ENCODE measurements at regions of chr1 and their contacts with region 1.

Region 1: GRCh38 chr1:27858072-27858958 is 14.0 kb upstream of the THEMIS2 start:
- DNase-seq: peak; percentile 80
- ATAC-seq: peak; percentile 88
- H3K4me3 Mint-ChIP-seq: no peak overlapping the region
- H3K27ac Mint-ChIP-seq: peak overlapping the region; percentile 68
- H3K4me1 Mint-ChIP-seq: peaks cover 28% of the 10 kb centered on the region
- H3K27me3 Mint-ChIP-seq: no peaks in the 10 kb centered on the region
- CTCF ChIP-seq: peak; percentile 95

Region 2: DNA sequence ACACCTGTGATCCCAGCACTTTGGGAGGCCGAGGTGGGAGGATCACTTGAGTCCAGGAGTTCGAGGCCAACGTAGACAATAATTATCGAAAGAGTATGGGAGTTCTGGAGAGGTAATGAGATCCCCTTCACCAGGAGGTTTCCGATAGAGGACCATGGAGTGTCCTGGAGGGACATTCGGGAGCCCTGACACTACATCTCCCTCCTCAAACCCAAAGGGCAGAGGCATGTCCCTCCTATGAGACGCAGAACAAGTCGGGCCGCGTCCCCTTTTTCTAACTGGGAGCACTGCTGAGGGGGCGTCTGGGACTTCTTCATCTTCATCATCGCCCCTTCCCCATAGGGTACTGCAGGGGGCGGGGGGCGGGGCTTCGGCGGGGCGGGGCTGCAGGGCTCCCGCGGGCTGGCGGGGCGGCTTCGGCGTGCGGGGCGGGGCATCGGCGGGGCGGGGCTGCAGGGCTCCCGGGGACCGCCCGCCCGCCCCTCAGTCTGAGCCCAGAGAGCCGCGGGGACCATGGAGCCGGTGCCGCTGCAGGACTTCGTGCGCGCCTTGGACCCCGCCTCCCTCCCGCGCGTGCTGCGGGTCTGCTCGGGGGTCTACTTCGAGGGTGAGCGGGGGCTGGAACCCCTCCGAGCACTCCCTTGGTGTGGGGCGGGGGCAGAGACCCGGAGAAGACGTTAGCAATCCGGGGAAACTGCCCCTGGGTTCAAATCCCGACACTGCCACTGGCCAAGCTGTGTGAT is 13.9 kb after region 1 on chr1 and contains the start of gene THEMIS2:
- CTCF ChIA-PET with region 1: interaction called, 3 read pairs
- POLR2A ChIA-PET with region 1: interaction called, 44 read pairs
- intact Hi-C with region 1: loop called (anchors 1 kb)
- DNase-seq: peak; percentile 73
- ATAC-seq: peak; percentile 71
- H3K4me3 Mint-ChIP-seq: peak within 1 kb of the TSS; percentile 97
- H3K27ac Mint-ChIP-seq: peak within 1 kb of the TSS; percentile 80
- H3K4me1 Mint-ChIP-seq: peaks cover 60% of the 10 kb centered on the region
- H3K27me3 Mint-ChIP-seq: no peaks in the 10 kb centered on the region
- CTCF ChIP-seq: no peak
- total RNA-seq, gene THEMIS2: 56.1 and 78.6 TPM in 2 replicates

Region 3: GRCh38 chr1:27891196-27891889 is 33.0 kb after region 1 on chr1:
- CTCF ChIA-PET with region 1: interaction called, 15 read pairs
- POLR2A ChIA-PET with region 1: interaction called, 19 read pairs
- intact Hi-C with region 1: loop called (anchors 1 kb)
- DNase-seq: no peak
- ATAC-seq: peak; percentile 76
- H3K4me3 Mint-ChIP-seq: peak overlapping the region; percentile 50
- H3K27ac Mint-ChIP-seq: peak overlapping the region; percentile 89
- H3K4me1 Mint-ChIP-seq: peaks cover 57% of the 10 kb centered on the region
- H3K27me3 Mint-ChIP-seq: no peaks in the 10 kb centered on the region
- CTCF ChIP-seq: no peak

Region 4: GRCh38 chr1:27959400-27960217 is 101.3 kb after region 1 on chr1 and contains the start of gene XKR8:
- CTCF ChIA-PET with region 1: interaction called, 3 read pairs
- POLR2A ChIA-PET with region 1: interaction called, 4 read pairs
- intact Hi-C with region 1: loop called (anchors 5 kb)
- DNase-seq: peak; percentile 86
- ATAC-seq: peak; percentile 99
- H3K4me3 Mint-ChIP-seq: peak within 1 kb of the TSS; percentile 89
- H3K27ac Mint-ChIP-seq: peak within 1 kb of the TSS; percentile 83
- H3K4me1 Mint-ChIP-seq: peaks cover 20% of the 10 kb centered on the region
- H3K27me3 Mint-ChIP-seq: no peaks in the 10 kb centered on the region
- CTCF ChIP-seq: no peak
- total RNA-seq, gene XKR8: 5.1 and 6.1 TPM in 2 replicates

Region 5: GRCh38 chr1:27979151-27979858 is 121.0 kb after region 1 on chr1:
- CTCF ChIA-PET with region 1: interaction called, 88 read pairs
- POLR2A ChIA-PET with region 1: interaction called, 21 read pairs
- intact Hi-C with region 1: loop called (anchors 1 kb)
- DNase-seq: no peak
- ATAC-seq: peak; percentile 68
- H3K4me3 Mint-ChIP-seq: no peak overlapping the region
- H3K27ac Mint-ChIP-seq: no peak overlapping the region
- H3K4me1 Mint-ChIP-seq: peaks cover 2% of the 10 kb centered on the region
- H3K27me3 Mint-ChIP-seq: no peaks in the 10 kb centered on the region
- CTCF ChIP-seq: peak; percentile 70

Region 6: DNA sequence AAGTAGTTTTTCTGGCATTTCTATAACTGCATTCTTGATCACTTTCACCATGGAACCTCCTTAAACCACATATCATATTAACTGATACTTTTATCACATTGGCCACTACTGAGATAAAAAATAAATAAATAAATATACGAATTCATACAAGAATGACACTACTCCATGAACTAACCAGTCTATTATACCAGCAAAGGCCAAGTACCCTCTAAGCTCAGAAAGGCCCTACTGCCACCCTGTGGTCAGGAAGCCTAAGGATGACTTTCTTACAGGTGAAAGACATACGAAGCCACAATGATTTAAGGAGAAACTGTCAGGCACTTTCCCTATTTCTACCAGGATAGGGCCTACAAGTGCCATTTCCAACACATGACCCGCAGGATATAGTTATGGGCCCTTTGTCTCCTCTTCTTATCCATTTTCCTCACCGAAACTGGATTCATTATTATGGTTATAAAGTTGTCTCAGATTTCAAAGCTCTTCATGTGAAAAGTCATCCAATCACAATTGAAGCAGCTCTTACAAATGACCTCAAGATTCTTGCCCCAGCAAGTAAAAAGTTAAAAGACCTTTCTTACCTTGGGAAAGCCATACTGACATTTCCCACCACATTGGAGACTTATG is 350.6 kb after region 1 on chr1:
- CTCF ChIA-PET with region 1: interaction called, 5 read pairs
- POLR2A ChIA-PET with region 1: interaction called, 4 read pairs
- intact Hi-C with region 1: loop called (anchors 1 kb)
- DNase-seq: no peak
- ATAC-seq: peak; percentile 86
- H3K4me3 Mint-ChIP-seq: no peak overlapping the region
- H3K27ac Mint-ChIP-seq: no peak overlapping the region
- H3K4me1 Mint-ChIP-seq: peaks cover 2% of the 10 kb centered on the region
- H3K27me3 Mint-ChIP-seq: no peaks in the 10 kb centered on the region
- CTCF ChIP-seq: no peak

Measured in activated B cell treated with CpG ODN at 0.5 μM for 24 hours (primary cell).